Calu3 (cell line): ENCODE measurements at regions of chr6 and their contacts with region 1.

Region 1: DNA sequence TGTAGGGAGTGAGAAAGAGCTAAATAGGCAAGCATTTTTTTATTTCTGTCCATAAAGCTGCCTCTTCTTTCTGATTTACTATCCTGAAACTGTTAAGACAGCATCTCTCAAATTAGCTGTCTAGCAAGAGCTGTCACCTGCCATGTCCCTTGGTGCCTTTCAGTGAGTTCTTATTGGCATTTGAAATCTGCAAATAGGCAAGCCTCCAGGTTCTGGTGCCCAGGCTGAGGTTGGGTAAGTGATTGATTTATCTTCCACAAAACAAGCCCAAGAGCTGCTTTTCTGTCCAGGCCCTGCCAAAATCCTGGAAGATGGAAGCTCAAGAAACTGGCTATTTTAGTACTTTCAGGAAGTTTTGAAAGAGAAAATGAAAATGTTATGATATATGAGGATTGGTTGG is 22.4 kb downstream of the MANEA start:
- DNase-seq: no peak
- H3K4me3 Mint-ChIP-seq: no peak overlapping the region
- H3K27ac Mint-ChIP-seq: no peak overlapping the region
- H3K4me1 Mint-ChIP-seq: peaks cover 15% of the 10 kb centered on the region
- H3K27me3 Mint-ChIP-seq: no peaks in the 10 kb centered on the region
- CTCF ChIP-seq: no peak

Region 2: GRCh38 chr6:95856876-95857364 is 257.2 kb after region 1 on chr6:
- CTCF ChIA-PET with region 1: no interaction called
- intact Hi-C with region 1: loop called (anchors 5 kb)
- DNase-seq: no peak
- H3K4me3 Mint-ChIP-seq: no peak overlapping the region
- H3K27ac Mint-ChIP-seq: no peak overlapping the region
- H3K4me1 Mint-ChIP-seq: no peaks in the 10 kb centered on the region
- H3K27me3 Mint-ChIP-seq: no peaks in the 10 kb centered on the region
- CTCF ChIP-seq: no peak

Region 3: GRCh38 chr6:95948324-95948723 is 348.6 kb after region 1 on chr6:
- CTCF ChIA-PET with region 1: no interaction called
- intact Hi-C with region 1: no loop called
- DNase-seq: no peak
- H3K4me3 Mint-ChIP-seq: peak overlapping the region; percentile 21
- H3K27ac Mint-ChIP-seq: peak overlapping the region; percentile 3
- H3K4me1 Mint-ChIP-seq: peaks cover 21% of the 10 kb centered on the region
- H3K27me3 Mint-ChIP-seq: no peaks in the 10 kb centered on the region
- CTCF ChIP-seq: no peak